GM12878 (cell line): ENCODE measurements at regions of chr10 and their contacts with region 1.

Region 1: GRCh38 chr10:100433253-100434240 is 29.3 kb upstream of the WNT8B start:
- DNase-seq: peak; percentile 81
- ATAC-seq: peak; percentile 96
- H3K4me3 ChIP-seq: no peak overlapping the region
- H3K27ac ChIP-seq: no peak overlapping the region
- H3K4me1 ChIP-seq: no peaks in the 10 kb centered on the region
- H3K27me3 ChIP-seq: no peaks in the 10 kb centered on the region
- CTCF ChIP-seq: peak; percentile 96 to 100 (median 100); a peak in 5 of 6 replicates
- EP300 ChIP-seq: no peak
- POLR2A ChIP-seq: no peak
- RAD21 ChIP-seq: peak; percentile 98

Region 2: DNA sequence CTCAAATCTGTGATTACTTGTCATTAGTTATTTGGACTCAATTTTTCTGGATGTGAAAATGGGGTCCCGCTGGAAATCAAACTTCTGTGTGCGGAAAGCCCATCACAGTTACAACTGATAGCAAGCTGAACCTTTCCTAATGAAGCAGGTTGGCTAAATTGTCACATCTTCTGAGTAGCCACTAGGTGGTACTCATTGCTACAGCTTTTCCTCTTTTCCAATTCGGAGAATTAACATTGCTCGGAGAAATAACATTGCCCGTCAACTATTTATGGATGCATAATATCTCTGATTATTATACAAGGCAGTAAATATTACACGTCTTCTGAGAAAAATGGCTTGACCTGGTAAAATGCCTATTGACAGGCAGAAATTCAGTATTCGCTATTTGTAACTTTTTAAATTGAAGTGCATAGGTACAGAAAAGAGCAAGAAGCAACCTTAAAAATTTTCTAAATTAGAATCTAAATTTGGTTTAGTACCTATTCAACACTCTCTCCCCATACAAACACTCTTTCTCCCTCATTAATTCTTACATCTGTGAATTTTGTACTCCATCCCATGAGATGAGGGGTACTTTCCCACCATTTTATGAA is 129.7 kb before region 1 on chr10:
- CTCF ChIA-PET with region 1: interaction called, 33 read pairs
- POLR2A ChIA-PET with region 1: no interaction called
- RAD21 ChIA-PET with region 1: interaction called, 9 read pairs
- SMC1A ChIA-PET with region 1: interaction called, 7 read pairs
- in situ Hi-C with region 1: no loop called
- intact Hi-C with region 1: no loop called
- DNase-seq: no peak
- ATAC-seq: peak; percentile 74
- H3K4me3 ChIP-seq: no peak overlapping the region
- H3K27ac ChIP-seq: no peak overlapping the region
- H3K4me1 ChIP-seq: no peaks in the 10 kb centered on the region
- H3K27me3 ChIP-seq: no peaks in the 10 kb centered on the region; a peak in 2 of 4 replicates
- CTCF ChIP-seq: peak; percentile 59 to 61 (median 60)
- EP300 ChIP-seq: no peak
- POLR2A ChIP-seq: no peak
- RAD21 ChIP-seq: peak; percentile 73

Region 3: GRCh38 chr10:100327007-100327717 is 106.4 kb before region 1 on chr10:
- CTCF ChIA-PET with region 1: interaction called, 312 read pairs
- POLR2A ChIA-PET with region 1: interaction called, 3 read pairs
- RAD21 ChIA-PET with region 1: interaction called, 3 read pairs
- SMC1A ChIA-PET with region 1: interaction called, 60 read pairs
- in situ Hi-C with region 1: no loop called
- intact Hi-C with region 1: no loop called
- DNase-seq: peak; percentile 90
- ATAC-seq: peak; percentile 100
- H3K4me3 ChIP-seq: no peak overlapping the region; the same call in 1 of the 2 replicates
- H3K27ac ChIP-seq: peak overlapping the region; percentile 70
- H3K4me1 ChIP-seq: peaks cover 15% of the 10 kb centered on the region
- H3K27me3 ChIP-seq: no peaks in the 10 kb centered on the region; a peak in 1 of 4 replicates
- CTCF ChIP-seq: no peak
- EP300 ChIP-seq: peak in 1 of 2 experiments; percentile 57; a peak in 1 of 4 replicates
- POLR2A ChIP-seq: peak; percentile 19; the same call in 1 of the 2 replicates
- RAD21 ChIP-seq: no peak

Region 4: GRCh38 chr10:100346765-100347567 is 86.6 kb before region 1 on chr10 and contains the start of gene SCD:
- CTCF ChIA-PET with region 1: interaction called, 312 read pairs
- POLR2A ChIA-PET with region 1: interaction called, 6 read pairs
- RAD21 ChIA-PET with region 1: interaction called, 214 read pairs
- SMC1A ChIA-PET with region 1: interaction called, 277 read pairs
- in situ Hi-C with region 1: loop called (anchors 5 kb)
- intact Hi-C with region 1: no loop called
- DNase-seq: peak; percentile 93
- ATAC-seq: peak; percentile 93
- H3K4me3 ChIP-seq: peak within 1 kb of the TSS; percentile 86
- H3K27ac ChIP-seq: peak within 1 kb of the TSS; percentile 72
- H3K4me1 ChIP-seq: peaks cover 18% of the 10 kb centered on the region
- H3K27me3 ChIP-seq: no peaks in the 10 kb centered on the region
- CTCF ChIP-seq: no peak
- EP300 ChIP-seq: 0 out of 4 replicates have a peak, but pooled peaks of 1 of the 2 experiments have one; percentile 10
- POLR2A ChIP-seq: peak; percentile 72
- RAD21 ChIP-seq: no peak
- polyA plus RNA-seq, gene SCD: 77.5 to 86.1 TPM

Region 5: DNA sequence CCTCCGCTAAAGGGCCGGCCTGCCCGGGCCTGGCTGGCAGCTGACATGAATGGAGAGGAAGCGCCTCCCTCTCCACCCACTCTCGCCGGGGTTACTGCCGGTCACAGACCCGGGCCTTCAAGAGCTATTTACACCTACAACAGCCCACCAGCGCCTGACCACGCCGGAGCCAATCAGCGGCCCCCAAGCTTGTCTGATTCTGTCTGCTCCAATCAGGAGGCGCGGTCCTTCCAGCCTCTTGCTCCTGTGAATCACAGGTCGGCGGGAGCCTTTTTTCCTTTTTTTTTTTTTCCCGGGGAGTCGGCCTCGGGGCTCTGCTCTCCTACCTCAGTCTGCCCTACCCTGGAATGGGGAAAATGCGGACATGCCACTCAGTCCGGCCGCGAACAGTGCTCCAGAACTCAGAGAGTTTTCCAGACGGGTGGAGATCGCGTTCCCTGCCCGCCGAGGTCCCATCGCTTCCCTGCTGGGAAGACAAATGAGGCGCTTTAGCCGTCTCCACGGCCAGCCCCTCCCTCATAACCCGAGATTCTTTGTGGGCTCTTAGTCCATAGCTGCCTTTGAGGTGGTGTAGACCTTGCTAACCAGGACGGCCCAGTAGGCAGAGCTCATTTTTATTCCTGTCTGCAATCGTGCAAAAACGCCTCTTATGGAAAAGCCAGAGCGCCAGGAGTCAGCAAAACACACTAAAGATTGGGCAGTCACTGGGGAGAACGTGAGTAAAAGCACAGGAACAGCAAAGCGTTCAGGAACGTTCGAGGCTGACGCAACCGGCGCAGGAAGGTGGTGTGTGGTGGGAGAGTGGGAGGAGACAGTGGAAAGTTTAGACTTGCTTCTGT is 60.0 kb before region 1 on chr10:
- CTCF ChIA-PET with region 1: interaction called, 12 read pairs
- POLR2A ChIA-PET with region 1: interaction called, 3 read pairs
- RAD21 ChIA-PET with region 1: interaction called, 6 read pairs
- SMC1A ChIA-PET with region 1: interaction called, 13 read pairs
- in situ Hi-C with region 1: no loop called
- intact Hi-C with region 1: no loop called
- DNase-seq: peak; percentile 85
- ATAC-seq: peak; percentile 95
- H3K4me3 ChIP-seq: peak overlapping the region; percentile 94
- H3K27ac ChIP-seq: peak overlapping the region; percentile 85
- H3K4me1 ChIP-seq: peaks cover 34% of the 10 kb centered on the region
- H3K27me3 ChIP-seq: no peaks in the 10 kb centered on the region
- CTCF ChIP-seq: no peak
- EP300 ChIP-seq: peak in 1 of 2 experiments; percentile 22; a peak in 1 of 4 replicates
- POLR2A ChIP-seq: peak; percentile 74
- RAD21 ChIP-seq: no peak

Region 6: GRCh38 chr10:100508691-100509150 is 75.2 kb after region 1 on chr10:
- CTCF ChIA-PET with region 1: interaction called, 13 read pairs
- POLR2A ChIA-PET with region 1: no interaction called
- RAD21 ChIA-PET with region 1: interaction called, 11 read pairs
- SMC1A ChIA-PET with region 1: interaction called, 11 read pairs
- in situ Hi-C with region 1: loop called (anchors 5 kb)
- intact Hi-C with region 1: loop called (anchors 1 kb)
- DNase-seq: no peak
- ATAC-seq: peak; percentile 94
- H3K4me3 ChIP-seq: no peak overlapping the region
- H3K27ac ChIP-seq: no peak overlapping the region
- H3K4me1 ChIP-seq: peaks cover 8% of the 10 kb centered on the region; the same call in 1 of the 2 replicates
- H3K27me3 ChIP-seq: no peaks in the 10 kb centered on the region
- CTCF ChIP-seq: peak; percentile 34 to 64 (median 51)
- EP300 ChIP-seq: no peak
- POLR2A ChIP-seq: no peak
- RAD21 ChIP-seq: peak; percentile 62

Region 7: GRCh38 chr10:100878291-100878910 is 444.9 kb after region 1 on chr10:
- CTCF ChIA-PET with region 1: no interaction called
- POLR2A ChIA-PET with region 1: no interaction called
- RAD21 ChIA-PET with region 1: no interaction called
- SMC1A ChIA-PET with region 1: interaction called, 3 read pairs
- in situ Hi-C with region 1: no loop called
- intact Hi-C with region 1: loop called (anchors 10 kb)
- DNase-seq: no peak
- ATAC-seq: peak; percentile 86
- H3K4me3 ChIP-seq: no peak overlapping the region
- H3K27ac ChIP-seq: no peak overlapping the region
- H3K4me1 ChIP-seq: no peaks in the 10 kb centered on the region
- H3K27me3 ChIP-seq: no peaks in the 10 kb centered on the region; a peak in 1 of 4 replicates
- CTCF ChIP-seq: peak; percentile 55 to 76 (median 63); a peak in 5 of 6 replicates
- EP300 ChIP-seq: no peak
- POLR2A ChIP-seq: no peak
- RAD21 ChIP-seq: peak; percentile 77